Heart right ventricle (tissue), 16 donors: ENCODE measurements at regions of chr22 and their contacts with region 1.

Region 1: DNA sequence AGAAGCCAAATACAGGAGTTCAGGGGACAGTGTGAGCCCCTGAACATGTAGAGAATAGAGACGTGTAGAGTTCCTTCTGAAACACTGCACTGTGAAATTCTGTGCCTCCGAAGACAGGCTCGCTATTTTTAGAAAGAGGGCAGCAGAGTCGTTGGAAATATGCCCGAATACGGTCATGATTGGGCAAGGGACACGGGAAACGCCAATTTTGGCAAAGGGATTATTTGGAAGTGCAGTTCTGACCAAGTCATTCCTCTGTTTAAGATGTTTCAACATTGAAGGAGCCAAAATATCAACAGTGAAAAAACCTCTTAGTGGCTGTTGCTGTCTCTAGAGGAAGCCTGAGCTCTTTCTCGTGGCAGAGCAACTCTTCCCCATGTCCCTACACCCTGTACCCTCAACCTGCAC is 9.5 kb upstream of the CBX6 start:
- DNase-seq: no peak
- ATAC-seq: peak; percentile 66 to 84 (median 75)
- H3K4me3 ChIP-seq: peak overlapping the region in 1 of 10 donors; percentile 2
- H3K27ac ChIP-seq: peak overlapping the region; percentile 45 to 85 (median 78)
- H3K4me1 ChIP-seq: peaks cover 7 to 27% (median 22%) of the 10 kb centered on the region in 9 donors
- H3K27me3 ChIP-seq: no peaks in the 10 kb centered on the region
- CTCF ChIP-seq: peak in 1 of 9 donors; percentile 15

Region 2: DNA sequence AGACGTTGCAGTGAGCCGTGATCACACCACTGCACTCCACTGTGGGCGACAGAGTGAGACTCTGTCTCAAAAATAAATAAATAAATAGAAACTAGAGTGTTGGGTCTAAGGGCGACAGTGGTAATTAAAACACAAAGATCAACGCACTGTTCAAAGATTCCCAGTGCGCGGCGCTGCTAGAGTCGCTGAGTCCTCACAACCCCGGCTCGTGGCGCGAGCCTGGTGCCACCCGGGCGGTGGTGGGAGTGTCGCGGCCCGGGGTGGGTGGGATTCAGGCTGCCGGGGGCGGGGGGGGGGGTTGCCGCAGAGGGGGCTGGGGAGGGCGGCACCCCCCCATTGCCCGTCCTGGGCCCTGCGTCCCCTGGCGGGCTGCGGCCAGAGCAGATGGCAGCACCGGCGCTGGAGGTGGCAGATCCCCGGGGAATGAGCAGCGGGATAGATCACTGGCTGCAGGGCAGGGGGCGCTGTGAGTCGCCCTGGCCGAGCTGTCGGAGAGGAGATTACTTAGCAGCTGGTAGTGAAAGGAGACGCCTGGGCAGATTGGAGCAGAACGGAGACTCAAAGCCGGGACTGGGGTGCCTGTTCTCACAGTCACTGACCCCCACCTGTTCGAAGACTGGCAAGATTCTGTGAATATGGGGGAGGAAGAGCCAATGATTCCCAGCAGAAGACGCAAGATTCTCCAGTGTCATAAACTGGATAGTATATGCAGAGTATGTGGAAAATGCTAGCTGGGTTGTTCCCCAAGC is 45.7 kb after region 1 on chr22:
- intact Hi-C with region 1: loop called in 6 of 10 experiments (anchors 5 to 10 kb)
- DNase-seq: peak; percentile 65 to 77
- ATAC-seq: peak; percentile 70 to 88 (median 76)
- H3K4me3 ChIP-seq: peak overlapping the region in 9 of 10 donors; percentile 2 to 45 (median 31)
- H3K27ac ChIP-seq: peak overlapping the region in 9 of 10 donors; percentile 36 to 76 (median 58)
- H3K4me1 ChIP-seq: peaks cover 4 to 34% (median 25%) of the 10 kb centered on the region in 9 donors
- H3K27me3 ChIP-seq: peaks cover 0 to 46% (median 7%) of the 10 kb centered on the region in 7 donors
- CTCF ChIP-seq: peak in 8 of 9 donors; percentile 26 to 85 (median 70)

Region 3: GRCh38 chr22:39123751-39124601 is 242.5 kb after region 1 on chr22:
- intact Hi-C with region 1: loop called in 1 of 10 experiments (anchors 5 kb)
- DNase-seq: no peak
- ATAC-seq: peak in 3 of 8 donors; percentile 23 to 35 (median 32)
- H3K4me3 ChIP-seq: no peak overlapping the region
- H3K27ac ChIP-seq: no peak overlapping the region
- H3K4me1 ChIP-seq: peaks cover 0 to 2% (median 0%) of the 10 kb centered on the region in 9 donors
- H3K27me3 ChIP-seq: no peaks in the 10 kb centered on the region
- CTCF ChIP-seq: no peak